ENCODE measurements at regions of chr3 and their contacts with region 1.

Region 1: GRCh38 chr3:81154611-81155143 is 606.8 kb downstream of the GBE1 start:
- DNase-seq: no peak
- ATAC-seq: no peak
- H3K4me3 ChIP-seq: no peak overlapping the region
- H3K27ac ChIP-seq: no peak overlapping the region
- H3K4me1 ChIP-seq: no peaks in the 10 kb centered on the region
- H3K27me3 ChIP-seq: no peaks in the 10 kb centered on the region
- CTCF ChIP-seq: no peak
- POLR2A ChIP-seq: no peak
- RAD21 ChIP-seq: no peak

Region 2: DNA sequence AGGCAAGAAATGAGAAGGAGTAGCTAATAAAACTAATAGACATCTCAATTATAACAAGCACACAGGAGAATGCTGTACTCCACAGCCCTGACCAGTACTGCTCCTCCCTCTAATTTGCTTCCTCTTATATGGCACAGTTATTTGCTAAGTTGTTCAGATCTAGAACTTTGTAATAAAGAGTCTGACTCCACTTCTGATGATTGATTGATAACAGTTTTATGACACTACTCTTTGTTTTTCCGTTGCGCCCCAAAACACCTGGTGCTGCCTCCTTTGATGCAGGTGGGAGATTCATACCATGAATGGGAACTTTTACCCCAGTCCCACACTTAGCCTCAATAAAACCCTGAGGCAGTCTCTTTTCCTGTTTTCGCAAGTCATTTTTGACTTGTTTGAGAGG is 170.9 kb before region 1 on chr3:
- CTCF ChIA-PET with region 1: no interaction called
- POLR2A ChIA-PET with region 1: no interaction called
- dilution Hi-C with region 1: no loop called
- in situ Hi-C with region 1: no loop called
- intact Hi-C with region 1: no loop called
- DNase-seq: no peak
- ATAC-seq: no peak
- H3K4me3 ChIP-seq: no peak overlapping the region
- H3K27ac ChIP-seq: no peak overlapping the region
- H3K4me1 ChIP-seq: no peaks in the 10 kb centered on the region
- H3K27me3 ChIP-seq: no peaks in the 10 kb centered on the region
- CTCF ChIP-seq: no peak
- POLR2A ChIP-seq: no peak
- RAD21 ChIP-seq: no peak

Region 3: DNA sequence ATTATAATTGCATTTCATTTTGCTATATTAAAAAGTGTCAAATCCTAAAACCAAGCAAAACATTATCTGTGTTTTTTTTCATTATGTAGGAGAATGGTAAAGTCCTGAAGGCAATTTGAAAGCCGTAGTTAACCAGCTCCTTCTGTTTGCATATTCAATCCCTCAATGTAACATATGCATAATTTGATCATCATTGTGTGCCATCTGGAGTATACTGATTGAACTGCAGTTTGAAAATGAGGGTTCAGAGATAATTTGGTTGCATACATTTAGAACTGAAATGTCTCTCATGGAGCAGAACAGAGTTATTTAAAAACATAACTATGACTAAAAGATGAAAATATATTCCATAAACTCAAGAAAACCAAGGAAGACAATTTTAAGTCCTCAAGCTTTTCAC is 88.2 kb after region 1 on chr3:
- CTCF ChIA-PET with region 1: no interaction called
- POLR2A ChIA-PET with region 1: interaction called, 20 read pairs
- dilution Hi-C with region 1: no loop called
- in situ Hi-C with region 1: no loop called
- intact Hi-C with region 1: no loop called
- DNase-seq: peak; percentile 3
- ATAC-seq: no peak
- H3K4me3 ChIP-seq: no peak overlapping the region
- H3K27ac ChIP-seq: no peak overlapping the region
- H3K4me1 ChIP-seq: no peaks in the 10 kb centered on the region
- H3K27me3 ChIP-seq: no peaks in the 10 kb centered on the region
- CTCF ChIP-seq: peak; percentile 37
- POLR2A ChIP-seq: no peak
- RAD21 ChIP-seq: peak; percentile 28; the same call in 1 of the 2 replicates

Region 4: DNA sequence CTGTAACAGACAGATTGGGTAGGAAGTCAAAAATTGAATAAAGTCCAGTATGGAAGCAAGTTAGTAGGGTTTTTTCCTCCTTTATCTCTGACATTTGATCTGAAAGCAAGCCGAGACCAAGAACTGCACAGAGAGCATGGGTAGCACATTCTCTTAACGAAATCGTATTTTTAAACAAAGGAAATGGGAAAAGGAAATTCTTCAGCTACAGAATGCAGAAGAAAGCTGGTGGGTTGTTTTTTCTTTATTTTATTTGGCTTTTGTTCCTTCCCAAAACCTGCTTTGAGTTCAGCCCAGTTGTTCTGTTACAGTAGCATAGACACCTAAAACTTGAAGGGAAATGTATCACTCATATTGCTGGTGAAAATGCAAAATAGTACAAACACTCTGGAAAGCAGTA is 209.7 kb after region 1 on chr3:
- CTCF ChIA-PET with region 1: no interaction called
- POLR2A ChIA-PET with region 1: no interaction called
- dilution Hi-C with region 1: no loop called
- in situ Hi-C with region 1: no loop called
- intact Hi-C with region 1: no loop called
- DNase-seq: no peak
- ATAC-seq: no peak
- H3K4me3 ChIP-seq: no peak overlapping the region
- H3K27ac ChIP-seq: no peak overlapping the region
- H3K4me1 ChIP-seq: no peaks in the 10 kb centered on the region
- H3K27me3 ChIP-seq: no peaks in the 10 kb centered on the region
- CTCF ChIP-seq: no peak
- POLR2A ChIP-seq: no peak
- RAD21 ChIP-seq: no peak

Measured in IMR-90 (cell line).